ENCODE measurements at regions of chr20 and their contacts with region 1.

Region 1: DNA sequence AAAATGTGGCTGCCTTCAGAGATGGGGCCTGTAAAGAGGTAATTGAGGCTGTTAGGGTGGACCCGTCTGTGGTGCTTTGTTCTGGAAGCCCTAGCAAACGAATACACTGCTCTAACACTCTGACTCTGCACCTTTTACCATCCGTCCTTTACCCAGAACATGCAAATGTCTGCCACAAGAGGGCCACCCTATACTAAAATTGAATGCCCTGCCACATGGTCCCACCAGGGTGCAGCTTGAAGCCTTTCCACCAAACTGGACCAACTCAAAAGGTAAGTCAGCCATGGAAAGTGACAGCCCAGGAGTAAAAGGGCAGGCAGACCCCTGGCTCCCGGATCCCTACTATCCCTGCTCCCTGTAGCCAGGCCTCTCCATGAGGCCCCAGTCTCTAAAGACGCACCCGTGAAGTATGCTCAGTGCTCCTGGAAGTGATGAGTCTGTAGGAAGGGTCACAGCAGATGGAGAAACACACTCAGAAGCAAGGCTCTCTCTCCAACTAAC is 5.8 kb upstream of the BFSP1 start:
- DNase-seq: peak; percentile 72
- ATAC-seq: peak; percentile 98
- H3K4me3 ChIP-seq: no peak overlapping the region
- H3K27ac ChIP-seq: no peak overlapping the region
- H3K4me1 ChIP-seq: peaks cover 8% of the 10 kb centered on the region
- H3K27me3 ChIP-seq: no peaks in the 10 kb centered on the region
- CTCF ChIP-seq: peak; percentile 88

Region 2: DNA sequence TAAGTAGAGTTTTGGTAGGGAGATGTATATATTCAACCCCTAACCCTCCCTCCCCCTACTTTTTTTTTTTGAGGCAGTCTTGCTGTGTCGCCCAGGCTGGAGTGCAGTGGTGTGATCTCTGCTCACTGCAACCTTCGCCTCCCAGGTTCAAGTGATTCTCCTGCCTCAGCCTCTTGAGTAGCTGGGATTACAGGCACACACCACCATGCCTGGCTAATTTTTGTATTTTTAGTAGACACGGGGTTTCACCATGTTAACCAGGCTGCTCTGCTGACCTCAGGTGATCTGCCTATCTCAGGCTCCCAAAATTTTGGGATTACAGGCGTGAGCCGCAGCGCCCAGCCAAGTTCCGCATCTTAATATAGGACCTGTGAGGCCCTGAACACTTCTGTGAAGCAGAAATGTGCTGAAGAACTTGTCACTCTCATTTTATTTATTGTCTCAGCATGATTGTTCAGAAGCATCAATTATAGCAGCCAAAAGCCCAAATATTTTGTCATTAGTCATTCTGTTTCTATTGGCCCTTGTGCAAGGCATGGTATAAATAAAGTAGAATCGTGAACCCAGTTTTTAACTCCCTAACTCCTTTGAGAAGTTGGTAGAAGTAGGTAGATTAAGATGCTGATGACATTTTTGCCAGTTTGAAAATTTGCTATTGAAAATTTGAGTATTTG is 52.3 kb after region 1 on chr20:
- intact Hi-C with region 1: loop called (anchors 10 kb)
- DNase-seq: no peak
- ATAC-seq: no peak
- H3K4me3 ChIP-seq: no peak overlapping the region
- H3K27ac ChIP-seq: no peak overlapping the region
- H3K4me1 ChIP-seq: peaks cover 68% of the 10 kb centered on the region
- H3K27me3 ChIP-seq: no peaks in the 10 kb centered on the region
- CTCF ChIP-seq: no peak

Region 3: DNA sequence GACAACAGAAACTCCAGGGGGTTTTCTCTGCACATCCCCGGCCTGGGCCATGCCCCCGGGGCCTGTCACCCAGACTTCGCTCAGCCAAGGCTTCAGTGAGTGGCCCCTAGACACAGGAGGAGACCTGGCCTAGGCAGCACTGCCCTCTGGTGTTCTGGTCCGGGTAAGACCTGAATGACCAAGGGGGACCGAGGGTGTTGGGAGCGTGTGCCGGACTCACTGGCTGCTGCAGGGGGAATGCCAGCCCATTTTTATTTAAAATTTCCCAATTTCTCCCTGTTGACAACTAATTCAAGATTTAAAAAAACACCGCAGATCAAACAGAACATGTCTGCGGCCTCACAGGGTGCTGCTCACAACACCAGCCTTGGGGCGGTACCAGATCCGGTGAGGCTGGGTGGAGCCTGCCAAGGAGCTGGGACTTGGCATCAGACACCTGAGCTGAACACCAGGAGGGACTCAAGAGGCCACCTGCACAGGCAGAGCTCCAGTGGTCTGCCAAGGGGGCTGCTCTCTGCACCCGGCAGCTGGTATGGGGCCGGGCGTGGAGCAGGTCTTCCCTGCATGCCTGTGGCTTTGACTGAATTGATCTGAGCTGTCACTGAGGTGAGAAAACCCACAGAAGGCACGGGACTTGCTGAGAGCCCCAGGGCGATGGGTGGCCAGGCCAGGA is 80.7 kb after region 1 on chr20:
- intact Hi-C with region 1: loop called (anchors 5 kb)
- DNase-seq: peak; percentile 76
- ATAC-seq: peak; percentile 69
- H3K4me3 ChIP-seq: no peak overlapping the region
- H3K27ac ChIP-seq: no peak overlapping the region
- H3K4me1 ChIP-seq: peaks cover 14% of the 10 kb centered on the region
- H3K27me3 ChIP-seq: no peaks in the 10 kb centered on the region
- CTCF ChIP-seq: peak; percentile 69